GM10248 (cell line): ENCODE measurements at regions of chr17 and their contacts with region 1.

Region 1: GRCh38 chr17:10618202-10618635 is 38.9 kb downstream of the MYH3 start:
- DNase-seq: peak; percentile 80
- CTCF ChIP-seq: peak; percentile 96

Region 2: GRCh38 chr17:9924735-9925191 is 693.5 kb before region 1 on chr17:
- CTCF ChIA-PET with region 1: interaction called, 36 read pairs
- POLR2A ChIA-PET with region 1: no interaction called
- DNase-seq: peak; percentile 76
- CTCF ChIP-seq: peak; percentile 66

Region 3: GRCh38 chr17:9968902-9969617 is 649.2 kb before region 1 on chr17:
- CTCF ChIA-PET with region 1: interaction called, 11 read pairs
- POLR2A ChIA-PET with region 1: no interaction called
- DNase-seq: no peak
- CTCF ChIP-seq: no peak

Region 4: DNA sequence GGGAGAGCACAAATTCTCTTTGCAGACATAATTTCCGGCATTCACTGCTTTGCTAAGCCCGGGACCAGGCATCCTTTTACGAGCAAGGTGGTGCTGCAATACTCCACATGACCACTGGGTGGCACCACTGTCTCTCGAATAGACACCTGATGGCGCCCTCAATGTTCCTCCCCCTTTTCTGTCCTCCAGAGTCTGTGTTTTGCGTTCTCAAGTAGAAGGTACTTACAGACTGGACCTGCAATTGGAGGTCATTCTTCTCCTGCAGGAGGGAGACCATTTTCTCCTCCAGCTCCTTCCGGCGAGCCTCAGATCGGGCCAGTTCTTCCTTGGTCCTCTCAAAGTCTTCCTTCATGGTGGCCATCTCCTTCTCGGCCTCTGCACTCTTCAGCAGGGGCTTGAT is 290.6 kb before region 1 on chr17:
- CTCF ChIA-PET with region 1: interaction called, 213 read pairs
- POLR2A ChIA-PET with region 1: no interaction called
- DNase-seq: peak; percentile 85
- CTCF ChIP-seq: peak; percentile 86

Region 5: DNA sequence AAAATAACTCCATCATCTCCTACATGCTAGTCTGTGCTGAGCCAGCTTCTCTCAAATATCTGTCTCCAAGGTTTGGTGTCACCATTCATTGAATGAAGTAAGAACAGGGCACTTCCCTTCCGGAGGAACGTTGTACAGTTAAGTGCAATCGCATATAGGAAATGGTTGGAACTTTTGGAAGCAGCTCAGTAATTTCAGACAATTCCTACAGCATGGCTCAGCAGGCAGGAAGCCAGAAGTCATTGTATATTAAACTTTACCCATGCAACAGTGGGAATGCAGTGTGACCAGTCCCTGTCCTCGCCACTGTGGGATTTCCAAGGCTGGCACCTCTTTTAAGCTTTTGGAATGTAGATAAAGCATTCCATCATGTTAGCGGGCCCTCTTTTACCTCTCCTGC is 17.6 kb before region 1 on chr17:
- CTCF ChIA-PET with region 1: interaction called, 85 read pairs
- POLR2A ChIA-PET with region 1: no interaction called
- DNase-seq: no peak
- CTCF ChIP-seq: no peak

Region 6: DNA sequence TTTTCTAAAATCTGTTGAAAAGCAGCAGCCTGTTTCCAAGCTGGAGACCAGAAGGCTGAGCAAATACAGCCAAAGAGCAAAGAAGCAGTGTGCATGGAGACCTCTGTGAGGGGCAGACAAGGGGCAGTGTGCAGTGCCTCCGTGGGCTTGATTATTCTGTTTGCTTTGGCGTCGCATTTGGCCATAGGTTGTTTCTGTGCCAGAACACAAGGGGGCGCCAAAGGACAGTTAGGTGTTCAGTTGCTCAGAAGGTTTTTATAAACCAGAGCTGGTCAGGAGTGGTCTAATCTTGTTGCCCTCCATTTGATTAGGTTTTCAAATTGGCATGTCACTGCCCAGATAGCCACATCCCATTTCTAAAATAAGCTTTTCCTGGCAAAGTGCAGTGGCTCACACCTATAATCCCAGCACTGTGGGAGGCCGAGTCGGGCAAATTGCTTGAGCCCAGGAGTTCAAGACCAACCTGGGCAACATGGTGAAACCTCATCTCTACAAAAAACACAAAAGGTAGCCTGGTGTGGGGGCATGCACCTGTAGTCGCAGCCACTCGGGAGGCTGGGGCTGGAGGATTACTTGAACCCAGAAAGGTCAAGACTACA is 28.3 kb after region 1 on chr17:
- CTCF ChIA-PET with region 1: interaction called, 17 read pairs
- POLR2A ChIA-PET with region 1: no interaction called
- DNase-seq: peak; percentile 72
- CTCF ChIP-seq: peak; percentile 90